ENCODE measurements at regions of chr19 and their contacts with region 1.

Region 1: DNA sequence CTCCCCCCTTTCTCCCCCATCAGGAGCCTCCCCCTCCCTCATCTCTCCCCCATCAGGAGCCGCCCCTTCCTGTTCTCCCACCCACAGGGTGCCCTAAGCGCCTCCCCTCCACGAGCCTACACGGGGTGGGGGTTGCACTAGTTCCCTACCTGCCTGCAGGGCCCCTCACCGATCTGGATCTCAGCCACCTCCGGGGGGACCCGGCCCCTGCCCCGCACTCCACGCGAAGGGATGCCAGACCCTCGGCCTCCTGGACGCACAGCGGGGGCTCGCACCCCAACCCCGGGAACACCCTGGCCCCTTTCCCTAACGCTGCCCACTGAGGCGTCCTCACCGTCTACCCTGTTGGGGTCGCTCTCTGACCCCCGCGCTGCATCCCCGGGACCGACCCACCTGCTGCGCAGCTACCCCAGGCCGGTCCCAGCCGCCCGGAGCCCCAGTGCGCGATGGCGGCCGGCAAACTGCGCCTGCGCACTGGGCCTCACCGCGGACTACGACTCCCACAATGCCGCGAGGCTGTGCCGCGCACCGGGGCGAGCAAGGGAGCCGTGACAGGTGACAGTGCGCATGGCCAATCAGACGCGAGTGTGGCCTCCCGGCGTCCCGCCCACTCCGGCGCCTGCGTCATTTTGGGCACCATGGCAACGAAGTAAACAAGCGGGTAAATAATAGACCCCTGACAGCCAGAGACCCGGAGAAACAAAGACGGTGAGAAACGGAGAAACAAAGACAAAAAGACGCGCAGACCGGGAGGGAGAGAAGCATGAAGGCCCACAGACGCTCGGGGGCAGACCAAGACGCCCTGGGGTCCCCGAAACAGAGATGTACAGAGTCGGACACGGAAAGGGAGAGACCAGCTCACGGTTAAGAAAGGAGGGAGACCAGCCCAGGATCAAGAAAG is at the start of gene ZSCAN18:
- DNase-seq: peak; percentile 98 to 99 (median 98)
- H3K4me3 ChIP-seq: peak within 1 kb of the TSS; percentile 72 to 100 (median 98)
- H3K27ac ChIP-seq: peak within 1 kb of the TSS; percentile 7 to 99 (median 92)
- H3K27me3 ChIP-seq: no peaks in the 10 kb centered on the region
- CTCF ChIP-seq: peak in 20 of 56 donors; percentile 2 to 49 (median 14)
- total RNA-seq, gene ZSCAN18: 140 to 230 (median 177) TPM

Region 2: GRCh38 chr19:58009666-58010371 is 88.2 kb before region 1 on chr19:
- intact Hi-C with region 1: loop called in 1 of 2 experiments (anchors 5 kb)
- DNase-seq: peak; percentile 84 to 96 (median 94)
- H3K4me3 ChIP-seq: peak overlapping the region; percentile 39 to 82 (median 67)
- H3K27ac ChIP-seq: peak overlapping the region in 58 of 59 donors; percentile 42 to 98 (median 86)
- H3K27me3 ChIP-seq: no peaks in the 10 kb centered on the region
- CTCF ChIP-seq: peak in 12 of 56 donors; percentile 5 to 29 (median 22)

Region 3: GRCh38 chr19:58252102-58252685 is 154.2 kb after region 1 on chr19:
- intact Hi-C with region 1: no loop called
- DNase-seq: no peak
- H3K4me3 ChIP-seq: no peak overlapping the region
- H3K27ac ChIP-seq: no peak overlapping the region
- H3K27me3 ChIP-seq: no peaks in the 10 kb centered on the region
- CTCF ChIP-seq: no peak

Measured in dorsolateral prefrontal cortex (tissue), 120 donors.